Endothelial cell of umbilical vein (primary cell): ENCODE measurements at regions of chr12 and their contacts with region 1.

Region 1: GRCh38 chr12:96416033-96416801 is 16.0 kb upstream of the CDK17 start:
- DNase-seq: peak; percentile 33
- H3K4me3 ChIP-seq: no peak overlapping the region
- H3K27ac ChIP-seq: no peak overlapping the region
- H3K4me1 ChIP-seq: peaks cover 43% of the 10 kb centered on the region
- H3K27me3 ChIP-seq: no peaks in the 10 kb centered on the region
- CTCF ChIP-seq: no peak
- POLR2A ChIP-seq: no peak

Region 2: DNA sequence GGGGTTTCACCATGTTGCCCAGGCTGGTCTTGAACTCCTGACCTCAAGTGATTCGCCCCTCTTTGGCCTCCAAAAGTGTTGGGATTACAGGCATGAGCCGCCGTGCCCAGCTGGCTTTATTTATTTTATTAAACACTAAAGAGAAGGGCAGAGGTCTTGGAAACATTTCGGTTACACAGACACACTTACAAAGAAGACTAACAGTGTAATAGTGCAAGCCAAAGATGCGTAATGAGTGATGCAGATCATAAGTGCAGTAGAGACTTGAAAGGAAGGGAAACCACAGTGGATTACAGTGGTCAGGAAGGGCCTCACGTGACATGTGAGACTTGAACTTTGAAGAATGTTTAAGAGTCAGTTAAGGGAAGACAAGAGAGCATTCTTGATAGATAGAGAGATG is 17.9 kb after region 1 on chr12:
- CTCF ChIA-PET with region 1: interaction called, 7 read pairs
- POLR2A ChIA-PET with region 1: interaction called, 25 read pairs
- dilution Hi-C with region 1: no loop called
- intact Hi-C with region 1: no loop called
- DNase-seq: peak; percentile 47
- H3K4me3 ChIP-seq: no peak overlapping the region
- H3K27ac ChIP-seq: no peak overlapping the region
- H3K4me1 ChIP-seq: peaks cover 30% of the 10 kb centered on the region
- H3K27me3 ChIP-seq: no peaks in the 10 kb centered on the region
- CTCF ChIP-seq: no peak
- POLR2A ChIP-seq: no peak

Region 3: DNA sequence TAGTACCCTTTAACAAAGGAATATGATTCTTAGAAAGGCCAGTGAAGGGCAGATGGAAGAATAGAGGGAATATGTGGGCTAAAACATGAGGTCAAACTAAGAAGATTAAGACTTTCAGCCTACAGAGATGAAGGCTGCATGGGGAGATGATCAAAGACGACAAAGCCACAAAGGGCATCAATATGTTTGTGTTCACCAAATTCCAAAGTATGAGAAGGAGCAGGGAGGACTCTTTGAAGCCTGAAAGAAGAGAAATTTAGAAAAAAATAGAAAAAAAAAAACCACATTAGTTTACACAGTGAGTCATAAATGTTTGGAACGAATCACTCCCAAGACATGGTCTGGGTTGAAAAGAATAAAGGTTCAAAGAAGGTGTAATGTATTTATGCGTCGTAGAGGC is 622.6 kb after region 1 on chr12:
- CTCF ChIA-PET with region 1: no interaction called
- POLR2A ChIA-PET with region 1: no interaction called
- dilution Hi-C with region 1: no loop called
- intact Hi-C with region 1: no loop called
- DNase-seq: no peak
- H3K4me3 ChIP-seq: no peak overlapping the region
- H3K27ac ChIP-seq: no peak overlapping the region
- H3K4me1 ChIP-seq: no peaks in the 10 kb centered on the region
- H3K27me3 ChIP-seq: no peaks in the 10 kb centered on the region
- CTCF ChIP-seq: no peak
- POLR2A ChIP-seq: no peak